ENCODE measurements at regions of chr21 and their contacts with region 1.

Region 1: GRCh38 chr21:45140346-45140940 is 66.1 kb downstream of the ADARB1 start:
- DNase-seq: peak; percentile 82
- ATAC-seq: peak; percentile 93
- H3K4me3 Mint-ChIP-seq: no peak overlapping the region
- H3K27ac Mint-ChIP-seq: no peak overlapping the region
- H3K4me1 Mint-ChIP-seq: peaks cover 10% of the 10 kb centered on the region
- H3K27me3 Mint-ChIP-seq: no peaks in the 10 kb centered on the region

Region 2: DNA sequence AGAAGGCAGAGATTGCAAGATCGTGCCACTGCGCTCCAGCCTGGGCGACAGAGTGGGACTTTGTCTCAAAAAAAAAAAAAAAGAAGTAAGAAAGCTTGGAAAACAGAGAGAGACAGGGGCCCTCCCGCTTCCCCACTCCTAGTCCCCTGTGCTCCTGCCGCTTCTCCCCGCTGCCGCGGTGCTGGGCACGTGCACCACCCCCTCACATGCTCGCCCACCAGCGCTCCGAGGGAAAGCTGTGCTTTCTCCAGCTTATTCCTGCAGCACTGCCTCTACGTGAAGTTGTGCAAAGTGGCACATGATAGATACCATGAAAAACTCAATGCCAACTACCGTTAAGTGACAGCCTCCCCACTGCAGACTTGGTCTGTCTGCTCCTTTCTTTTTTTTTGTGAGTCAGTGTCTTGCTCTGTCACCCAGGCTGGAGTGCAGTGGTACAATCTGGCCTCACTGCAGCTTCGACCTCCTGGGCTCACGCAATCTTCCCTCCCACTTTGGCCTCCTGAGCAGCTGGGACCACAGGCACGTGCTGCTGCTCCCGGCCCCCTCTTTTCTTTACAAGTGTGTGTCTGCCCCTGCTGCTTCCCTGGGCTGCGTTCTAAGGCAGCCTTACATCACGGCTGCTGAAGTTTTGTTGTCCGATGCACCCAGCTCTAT is 185.2 kb before region 1 on chr21:
- CTCF ChIA-PET with region 1: interaction called, 154 read pairs
- POLR2A ChIA-PET with region 1: no interaction called
- DNase-seq: no peak
- ATAC-seq: no peak
- H3K4me3 Mint-ChIP-seq: no peak overlapping the region
- H3K27ac Mint-ChIP-seq: no peak overlapping the region
- H3K4me1 Mint-ChIP-seq: no peaks in the 10 kb centered on the region
- H3K27me3 Mint-ChIP-seq: no peaks in the 10 kb centered on the region

Region 3: DNA sequence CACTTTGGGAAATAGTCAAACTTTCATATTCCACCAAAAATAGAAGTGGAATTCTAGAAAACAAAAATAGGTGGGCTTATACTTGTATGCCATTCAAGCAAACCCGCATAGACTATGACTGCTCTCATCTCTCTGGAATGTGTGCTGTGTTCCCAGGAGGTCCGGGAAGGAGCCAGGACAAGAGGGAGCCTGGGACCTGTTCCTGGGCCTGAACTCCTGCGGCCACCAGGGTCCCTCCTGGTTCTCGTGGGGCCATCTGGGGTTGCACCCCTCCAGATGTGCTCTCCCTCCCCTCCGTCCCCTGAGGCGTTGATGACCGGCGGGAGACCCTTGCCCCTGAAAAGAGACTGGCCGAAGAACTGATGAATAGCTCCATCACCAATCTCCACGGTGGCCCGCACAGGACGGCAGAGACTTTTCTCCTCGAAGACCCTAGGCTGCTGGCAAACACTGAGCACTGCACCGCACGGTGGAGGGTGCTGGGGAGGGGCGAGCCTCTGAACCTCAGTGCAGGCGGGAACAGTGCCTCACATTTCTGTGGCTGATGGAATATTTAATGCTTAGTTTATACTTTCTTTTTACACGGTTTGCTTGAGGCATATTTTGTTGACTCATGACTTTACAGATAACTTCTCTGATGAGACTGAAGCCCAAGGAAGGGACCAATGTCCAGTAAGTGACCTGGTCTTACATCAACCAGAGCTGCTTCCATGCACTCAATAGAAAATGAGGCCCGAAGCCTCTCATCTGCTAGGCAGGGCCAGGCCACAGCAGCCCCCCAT is 75.6 kb before region 1 on chr21:
- CTCF ChIA-PET with region 1: interaction called, 13 read pairs
- POLR2A ChIA-PET with region 1: interaction called, 3 read pairs
- DNase-seq: no peak
- ATAC-seq: no peak
- H3K4me3 Mint-ChIP-seq: no peak overlapping the region
- H3K27ac Mint-ChIP-seq: no peak overlapping the region
- H3K4me1 Mint-ChIP-seq: no peaks in the 10 kb centered on the region
- H3K27me3 Mint-ChIP-seq: peaks cover 17% of the 10 kb centered on the region

Region 4: GRCh38 chr21:45098867-45099266 is 41.6 kb before region 1 on chr21:
- CTCF ChIA-PET with region 1: interaction called, 41 read pairs
- POLR2A ChIA-PET with region 1: no interaction called
- DNase-seq: no peak
- ATAC-seq: no peak
- H3K4me3 Mint-ChIP-seq: no peak overlapping the region
- H3K27ac Mint-ChIP-seq: no peak overlapping the region
- H3K4me1 Mint-ChIP-seq: peaks cover 43% of the 10 kb centered on the region
- H3K27me3 Mint-ChIP-seq: no peaks in the 10 kb centered on the region

Region 5: DNA sequence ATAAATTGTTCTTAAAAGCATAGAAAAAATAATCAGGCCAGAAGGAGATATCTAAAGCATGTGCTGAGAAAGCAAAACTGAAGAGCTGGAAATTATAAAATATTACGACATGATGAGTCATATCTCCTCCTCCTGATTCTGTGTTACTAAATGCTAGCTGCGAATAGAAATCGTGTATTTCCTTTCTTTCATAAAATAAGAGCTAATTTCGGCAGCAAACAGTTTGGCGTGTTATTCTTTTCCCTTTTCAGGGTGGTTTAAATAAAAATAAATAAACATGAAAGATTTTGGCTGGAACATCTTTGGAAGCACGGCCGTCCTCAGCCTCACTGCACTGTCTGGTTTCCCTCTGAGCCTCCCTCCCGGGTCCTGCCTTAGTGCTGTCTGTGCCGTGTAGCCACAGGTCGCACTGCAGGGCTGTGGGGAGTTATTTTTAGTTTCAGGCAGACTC is 10.1 kb before region 1 on chr21:
- CTCF ChIA-PET with region 1: interaction called, 162 read pairs
- POLR2A ChIA-PET with region 1: no interaction called
- DNase-seq: no peak
- ATAC-seq: no peak
- H3K4me3 Mint-ChIP-seq: no peak overlapping the region
- H3K27ac Mint-ChIP-seq: no peak overlapping the region
- H3K4me1 Mint-ChIP-seq: peaks cover 21% of the 10 kb centered on the region
- H3K27me3 Mint-ChIP-seq: no peaks in the 10 kb centered on the region

Region 6: GRCh38 chr21:45292399-45293219 is 152.2 kb after region 1 on chr21:
- CTCF ChIA-PET with region 1: interaction called, 15 read pairs
- POLR2A ChIA-PET with region 1: no interaction called
- DNase-seq: peak; percentile 75
- ATAC-seq: peak; percentile 65
- H3K4me3 Mint-ChIP-seq: no peak overlapping the region
- H3K27ac Mint-ChIP-seq: peak overlapping the region; percentile 34
- H3K4me1 Mint-ChIP-seq: peaks cover 17% of the 10 kb centered on the region
- H3K27me3 Mint-ChIP-seq: peaks cover 9% of the 10 kb centered on the region